ENCODE measurements at regions of chr2 and their contacts with region 1.

Region 1: DNA sequence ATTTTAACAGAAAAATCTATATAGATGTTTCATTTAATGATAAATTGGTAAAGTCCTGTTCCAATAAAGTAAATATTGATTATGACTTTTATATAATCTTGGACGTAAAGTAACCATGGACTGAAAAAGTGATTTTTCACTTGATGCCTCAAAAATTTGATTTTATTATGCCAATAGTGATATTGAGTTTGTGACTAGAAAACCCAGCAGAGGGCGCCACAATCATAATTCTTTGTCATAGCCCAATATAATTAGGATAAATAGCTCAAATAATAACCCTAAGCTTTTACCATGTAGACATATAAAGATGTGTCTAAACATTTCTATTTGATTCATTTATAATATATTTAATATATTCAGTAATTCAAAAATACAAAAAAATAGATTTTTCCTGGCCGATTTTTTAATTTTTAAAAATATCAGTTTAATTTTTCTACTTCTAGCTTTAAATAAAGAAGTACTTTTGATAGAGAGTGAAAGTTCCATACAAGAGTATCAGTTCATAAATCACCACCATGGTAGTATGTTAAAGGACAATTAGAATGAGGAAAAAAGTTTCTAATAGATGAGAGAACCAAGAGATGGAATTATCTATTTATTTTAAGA is 30.7 kb downstream of the CAMKMT start:
- DNase-seq: peak; percentile 67
- H3K4me3 Mint-ChIP-seq: no peak overlapping the region
- H3K27ac Mint-ChIP-seq: no peak overlapping the region
- H3K4me1 Mint-ChIP-seq: no peaks in the 10 kb centered on the region
- H3K27me3 Mint-ChIP-seq: no peaks in the 10 kb centered on the region
- CTCF ChIP-seq: peak; percentile 58

Region 2: GRCh38 chr2:44107085-44107740 is 285.2 kb before region 1 on chr2:
- CTCF ChIA-PET with region 1: no interaction called
- POLR2A ChIA-PET with region 1: no interaction called
- intact Hi-C with region 1: no loop called
- DNase-seq: no peak
- H3K4me3 Mint-ChIP-seq: no peak overlapping the region
- H3K27ac Mint-ChIP-seq: no peak overlapping the region
- H3K4me1 Mint-ChIP-seq: no peaks in the 10 kb centered on the region
- H3K27me3 Mint-ChIP-seq: no peaks in the 10 kb centered on the region
- CTCF ChIP-seq: no peak

Region 3: DNA sequence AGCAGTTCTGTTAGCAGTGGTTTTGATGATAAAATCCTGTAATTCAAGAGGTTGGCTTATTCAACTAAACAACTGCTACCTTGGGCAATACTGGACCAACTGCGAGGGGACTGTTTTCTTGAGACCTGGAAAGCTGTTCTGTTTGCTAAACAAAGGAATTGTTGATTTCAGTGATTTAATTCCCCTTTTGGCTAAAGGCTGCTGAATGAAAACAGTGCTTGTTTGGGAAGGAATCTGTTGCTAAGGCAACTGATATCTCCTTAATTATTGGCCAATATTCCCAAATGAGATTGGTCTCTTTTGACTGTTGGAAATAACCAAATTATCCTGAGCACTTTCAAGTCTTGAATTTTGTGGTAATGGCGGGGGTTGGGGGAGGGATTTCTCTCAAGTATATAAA is 106.1 kb after region 1 on chr2:
- CTCF ChIA-PET with region 1: no interaction called
- POLR2A ChIA-PET with region 1: no interaction called
- intact Hi-C with region 1: no loop called
- DNase-seq: no peak
- H3K4me3 Mint-ChIP-seq: no peak overlapping the region
- H3K27ac Mint-ChIP-seq: no peak overlapping the region
- H3K4me1 Mint-ChIP-seq: no peaks in the 10 kb centered on the region
- H3K27me3 Mint-ChIP-seq: no peaks in the 10 kb centered on the region
- CTCF ChIP-seq: no peak

Region 4: GRCh38 chr2:44974064-44974715 is 581.7 kb after region 1 on chr2:
- CTCF ChIA-PET with region 1: interaction called, 7 read pairs
- POLR2A ChIA-PET with region 1: no interaction called
- intact Hi-C with region 1: loop called (anchors 5 kb)
- DNase-seq: peak; percentile 77
- H3K4me3 Mint-ChIP-seq: no peak overlapping the region
- H3K27ac Mint-ChIP-seq: no peak overlapping the region
- H3K4me1 Mint-ChIP-seq: peaks cover 5% of the 10 kb centered on the region
- H3K27me3 Mint-ChIP-seq: no peaks in the 10 kb centered on the region
- CTCF ChIP-seq: peak; percentile 63